K562 (cell line): ENCODE measurements at regions of chr6 and their contacts with region 1.

Region 1: GRCh38 chr6:90478789-90479602 is 107.9 kb downstream of the MAP3K7 start:
- DNase-seq: peak; percentile 90 to 95 (median 91)
- ATAC-seq: peak; percentile 99
- H3K4me3 ChIP-seq: no peak overlapping the region
- H3K27ac ChIP-seq: peak overlapping the region; percentile 35; the same call in 1 of the 3 replicates
- H3K4me1 ChIP-seq: peaks cover 0 to 13% of the 10 kb centered on the region in 2 experiments; a peak in 4 of 5 replicates
- H3K27me3 ChIP-seq: no peaks in the 10 kb centered on the region; a peak in 1 of 5 replicates
- CTCF ChIP-seq: peak; percentile 86 to 95 (median 92)
- EP300 ChIP-seq: peak; percentile 50; the same call in 1 of the 2 replicates
- POLR2A ChIP-seq: no peak
- RAD21 ChIP-seq: peak; percentile 99

Region 2: DNA sequence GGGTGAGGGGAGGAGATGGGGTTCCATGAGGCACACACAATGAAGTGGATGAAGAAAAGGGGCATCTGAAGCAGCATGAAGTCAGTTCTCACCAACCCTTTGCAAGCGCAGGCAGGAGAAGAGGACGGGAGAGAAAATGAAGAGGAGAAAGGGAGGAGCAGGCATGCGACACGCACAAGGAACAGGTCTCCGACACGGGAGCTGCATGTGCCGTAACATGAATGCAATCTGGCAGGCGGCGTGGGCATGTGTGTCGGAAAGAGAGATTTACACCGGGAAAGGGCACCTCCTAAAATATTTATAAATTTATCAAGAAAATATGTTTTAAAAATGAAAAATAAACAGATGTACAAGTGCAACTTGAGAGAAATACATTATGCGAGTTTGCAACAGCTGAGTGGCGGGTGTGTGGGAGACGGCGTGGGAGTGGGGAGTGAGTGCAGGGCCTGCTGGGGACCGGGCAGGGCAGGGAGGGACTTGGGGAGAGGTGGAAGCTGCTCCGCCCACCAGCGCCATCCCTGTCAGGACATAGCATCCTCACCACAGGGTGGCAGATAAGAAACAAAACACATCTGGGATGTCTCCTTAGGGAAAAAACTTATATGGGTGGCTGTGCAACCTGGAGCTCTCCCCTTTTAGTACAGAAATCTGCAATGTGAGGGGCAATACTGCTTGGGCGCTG is 544.2 kb before region 1 on chr6:
- CTCF ChIA-PET with region 1: interaction called, 6 read pairs
- POLR2A ChIA-PET with region 1: no interaction called
- in situ Hi-C with region 1: loop called (anchors 5 kb)
- intact Hi-C with region 1: loop called (anchors 1 kb)
- DNase-seq: peak; percentile 24 to 36 (median 29)
- ATAC-seq: peak; percentile 63
- H3K4me3 ChIP-seq: no peak overlapping the region
- H3K27ac ChIP-seq: no peak overlapping the region
- H3K4me1 ChIP-seq: peaks cover 9 to 10% of the 10 kb centered on the region in 2 experiments; a peak in 3 of 5 replicates
- H3K27me3 ChIP-seq: peaks cover 0 to 6% of the 10 kb centered on the region in 2 experiments; a peak in 1 of 5 replicates
- CTCF ChIP-seq: no peak
- EP300 ChIP-seq: no peak
- POLR2A ChIP-seq: no peak
- RAD21 ChIP-seq: no peak

Region 3: DNA sequence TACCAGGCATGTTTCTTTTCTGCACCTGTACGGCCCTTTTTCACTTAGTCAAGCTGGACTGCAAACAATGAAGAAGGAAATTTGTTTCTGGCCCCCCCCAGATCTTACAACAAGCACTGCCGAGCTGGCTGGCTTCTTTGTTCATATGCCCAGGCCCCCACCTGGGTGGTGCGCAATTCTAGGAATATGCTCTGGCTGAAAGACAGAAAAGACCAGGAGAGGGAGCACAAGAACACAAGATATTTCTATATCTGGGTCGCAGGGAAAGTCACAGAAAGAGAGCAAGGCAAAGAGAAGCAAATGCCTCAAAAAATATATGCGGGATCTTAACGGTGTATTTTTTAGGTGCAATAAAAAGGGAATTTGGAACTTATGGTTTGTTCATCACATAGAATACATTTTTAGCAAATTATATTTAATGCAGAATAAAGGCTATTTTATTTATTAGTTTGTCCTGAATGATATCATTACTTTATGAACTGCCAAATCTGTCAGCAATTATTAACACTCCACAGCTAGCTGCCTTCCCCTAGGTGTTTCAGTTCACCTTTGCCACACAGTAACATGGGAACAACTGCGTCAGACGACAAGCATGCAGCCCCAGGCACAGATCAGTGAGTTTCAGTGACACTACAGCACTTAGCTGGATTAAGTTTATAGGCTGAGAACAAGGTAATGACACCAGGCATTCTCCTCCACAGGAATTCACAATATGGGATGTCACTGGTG is 508.2 kb before region 1 on chr6:
- CTCF ChIA-PET with region 1: interaction called, 5 read pairs
- POLR2A ChIA-PET with region 1: no interaction called
- in situ Hi-C with region 1: no loop called
- intact Hi-C with region 1: loop called (anchors 1 kb)
- DNase-seq: peak; percentile 51 to 69 (median 53)
- ATAC-seq: peak; percentile 93
- H3K4me3 ChIP-seq: no peak overlapping the region
- H3K27ac ChIP-seq: no peak overlapping the region
- H3K4me1 ChIP-seq: peaks cover 3% of the 10 kb centered on the region in 2 experiments; a peak in 1 of 5 replicates
- H3K27me3 ChIP-seq: peaks cover 0 to 11% of the 10 kb centered on the region in 2 experiments; a peak in 1 of 5 replicates
- CTCF ChIP-seq: peak; percentile 62 to 76 (median 62); a peak in 5 of 6 replicates
- EP300 ChIP-seq: no peak
- POLR2A ChIP-seq: no peak
- RAD21 ChIP-seq: peak; percentile 83 to 89

Region 4: DNA sequence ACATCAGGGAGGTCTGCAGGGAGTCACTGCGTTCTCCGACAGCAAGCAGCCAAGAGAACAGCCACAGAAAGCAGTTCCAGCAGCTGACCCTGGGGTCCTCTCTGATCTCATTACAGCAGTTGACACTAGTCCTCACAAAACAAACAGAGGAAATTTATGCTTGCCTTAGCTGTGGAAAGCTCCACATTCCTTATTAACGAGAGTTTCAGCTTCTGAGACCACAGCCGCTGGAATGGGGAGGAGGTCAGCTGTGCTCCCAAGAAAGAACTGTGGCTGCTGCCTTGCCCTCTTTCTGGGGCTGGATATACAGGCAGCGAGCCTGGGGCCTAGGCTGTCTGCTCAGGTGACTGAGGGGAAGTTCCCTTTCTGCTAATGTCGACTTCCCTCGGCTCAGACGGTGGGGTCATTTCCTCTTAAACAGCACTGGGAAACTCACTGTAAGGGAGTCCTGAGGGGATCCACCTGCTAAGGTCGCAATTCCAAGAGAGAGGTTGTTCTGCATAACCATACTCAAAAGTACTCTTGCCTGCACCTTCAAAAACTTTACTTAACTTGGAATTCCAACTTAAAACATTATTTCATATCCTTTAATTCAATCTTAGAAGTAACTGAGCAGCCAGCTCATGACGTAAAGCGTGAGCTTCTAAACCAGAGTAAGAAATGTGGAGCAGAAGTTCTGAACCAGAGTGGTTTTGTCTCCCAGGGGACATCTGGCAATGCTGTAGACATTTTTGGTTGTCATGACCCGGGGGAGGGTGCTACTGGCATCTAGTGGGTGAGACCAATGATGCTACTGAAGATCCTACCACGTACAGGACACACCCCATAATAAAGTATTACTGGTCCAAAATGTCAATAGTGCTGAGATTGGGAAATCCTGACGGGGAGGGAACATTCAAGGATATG is 262.7 kb before region 1 on chr6:
- CTCF ChIA-PET with region 1: no interaction called
- POLR2A ChIA-PET with region 1: no interaction called
- in situ Hi-C with region 1: loop called (anchors 10 kb)
- intact Hi-C with region 1: loop called (anchors 10 kb)
- DNase-seq: no peak
- ATAC-seq: no peak
- H3K4me3 ChIP-seq: no peak overlapping the region
- H3K27ac ChIP-seq: no peak overlapping the region
- H3K4me1 ChIP-seq: peaks cover 4 to 24% of the 10 kb centered on the region in 2 experiments; a peak in 4 of 5 replicates
- H3K27me3 ChIP-seq: no peaks in the 10 kb centered on the region
- CTCF ChIP-seq: no peak
- EP300 ChIP-seq: no peak
- POLR2A ChIP-seq: no peak
- RAD21 ChIP-seq: no peak

Region 5: DNA sequence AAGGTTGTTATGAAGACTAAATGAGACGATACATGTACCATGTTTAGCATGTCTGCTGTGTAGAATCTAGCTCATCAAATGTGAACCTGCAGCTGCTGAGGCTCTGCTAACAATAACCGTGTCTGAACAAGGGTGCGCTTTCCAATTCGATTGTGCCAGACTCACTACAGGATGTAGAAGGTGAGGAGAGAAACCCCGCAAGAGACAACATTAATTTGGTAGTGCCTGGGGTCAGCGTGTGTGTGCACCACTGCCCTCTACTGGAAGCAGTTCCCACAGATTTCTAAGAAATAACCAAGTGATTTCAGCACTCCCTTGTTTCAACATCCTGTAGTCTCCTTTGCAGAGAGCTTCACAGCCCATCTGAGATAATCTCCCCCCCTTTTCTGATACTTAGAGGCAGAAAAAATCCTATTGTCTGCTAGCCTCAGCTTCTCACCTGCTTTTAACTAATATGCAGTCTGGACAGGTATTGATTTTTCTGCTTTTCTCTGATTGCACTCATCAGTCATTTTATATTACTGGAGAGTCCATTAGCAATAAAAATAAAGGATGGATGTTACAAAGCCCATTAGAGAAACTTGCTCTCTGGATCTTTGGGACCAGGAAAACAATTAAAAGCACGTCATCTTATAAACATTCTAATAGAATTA is 85.6 kb before region 1 on chr6:
- CTCF ChIA-PET with region 1: interaction called, 3 read pairs
- POLR2A ChIA-PET with region 1: no interaction called
- in situ Hi-C with region 1: no loop called
- intact Hi-C with region 1: loop called (anchors 2 kb)
- DNase-seq: peak; percentile 44 to 79 (median 50)
- ATAC-seq: peak; percentile 89
- H3K4me3 ChIP-seq: no peak overlapping the region
- H3K27ac ChIP-seq: no peak overlapping the region
- H3K4me1 ChIP-seq: peaks cover 7 to 14% of the 10 kb centered on the region in 2 experiments; a peak in 3 of 5 replicates
- H3K27me3 ChIP-seq: no peaks in the 10 kb centered on the region; a peak in 1 of 5 replicates
- CTCF ChIP-seq: peak; percentile 72 to 80 (median 79)
- EP300 ChIP-seq: no peak
- POLR2A ChIP-seq: no peak
- RAD21 ChIP-seq: peak; percentile 71 to 89

Region 6: GRCh38 chr6:90516074-90516660 is 37.2 kb after region 1 on chr6:
- CTCF ChIA-PET with region 1: no interaction called
- POLR2A ChIA-PET with region 1: no interaction called
- in situ Hi-C with region 1: no loop called
- intact Hi-C with region 1: no loop called
- DNase-seq: no peak
- ATAC-seq: no peak
- H3K4me3 ChIP-seq: no peak overlapping the region
- H3K27ac ChIP-seq: no peak overlapping the region
- H3K4me1 ChIP-seq: no peaks in the 10 kb centered on the region
- H3K27me3 ChIP-seq: no peaks in the 10 kb centered on the region
- CTCF ChIP-seq: no peak
- EP300 ChIP-seq: no peak
- POLR2A ChIP-seq: no peak
- RAD21 ChIP-seq: no peak

Region 7: GRCh38 chr6:90947184-90948064 is 468.4 kb after region 1 on chr6:
- CTCF ChIA-PET with region 1: no interaction called
- POLR2A ChIA-PET with region 1: no interaction called
- in situ Hi-C with region 1: no loop called
- intact Hi-C with region 1: no loop called
- DNase-seq: no peak
- ATAC-seq: no peak
- H3K4me3 ChIP-seq: no peak overlapping the region
- H3K27ac ChIP-seq: no peak overlapping the region
- H3K4me1 ChIP-seq: no peaks in the 10 kb centered on the region
- H3K27me3 ChIP-seq: peaks cover 0 to 13% of the 10 kb centered on the region in 2 experiments; a peak in 2 of 5 replicates
- CTCF ChIP-seq: no peak
- EP300 ChIP-seq: no peak
- POLR2A ChIP-seq: no peak
- RAD21 ChIP-seq: no peak